ENCODE measurements at regions of chr3 and their contacts with region 1.

Region 1: GRCh38 chr3:45593708-45594609 is 592 bp upstream of the LIMD1 start:
- DNase-seq: peak in 1 of 2 donors; percentile 44
- H3K4me3 ChIP-seq: peak overlapping the region; percentile 66 to 80 (median 69)
- H3K27ac ChIP-seq: peak overlapping the region; percentile 78 to 90
- H3K4me1 ChIP-seq: peaks cover 0 to 17% of the 10 kb centered on the region in 2 donors
- H3K27me3 ChIP-seq: no peaks in the 10 kb centered on the region
- CTCF ChIP-seq: no peak
- POLR2A ChIP-seq: no peak

Region 2: GRCh38 chr3:45575381-45575923 is 18.5 kb before region 1 on chr3:
- intact Hi-C with region 1: loop called (anchors 1 kb)
- DNase-seq: no peak
- H3K4me3 ChIP-seq: no peak overlapping the region
- H3K27ac ChIP-seq: no peak overlapping the region
- H3K4me1 ChIP-seq: no peaks in the 10 kb centered on the region
- H3K27me3 ChIP-seq: no peaks in the 10 kb centered on the region
- CTCF ChIP-seq: no peak
- POLR2A ChIP-seq: no peak

Region 3: GRCh38 chr3:45647148-45647619 is 53.2 kb after region 1 on chr3:
- intact Hi-C with region 1: loop called (anchors 10 kb)
- DNase-seq: no peak
- H3K4me3 ChIP-seq: no peak overlapping the region
- H3K27ac ChIP-seq: peak overlapping the region; percentile 73 to 90
- H3K4me1 ChIP-seq: peaks cover 0 to 6% of the 10 kb centered on the region in 2 donors
- H3K27me3 ChIP-seq: no peaks in the 10 kb centered on the region
- CTCF ChIP-seq: no peak
- POLR2A ChIP-seq: no peak

Measured in breast epithelium (tissue), 4 donors.